ENCODE measurements at regions of chr10 and their contacts with region 1.

Region 1: GRCh38 chr10:69215405-69216176 is 4.5 kb upstream of the HKDC1 start:
- DNase-seq: peak; percentile 73
- H3K4me3 Mint-ChIP-seq: peak overlapping the region; percentile 68
- H3K27ac Mint-ChIP-seq: peak overlapping the region; percentile 84
- H3K4me1 Mint-ChIP-seq: peaks cover 35% of the 10 kb centered on the region
- H3K27me3 Mint-ChIP-seq: no peaks in the 10 kb centered on the region

Region 2: GRCh38 chr10:68997211-68997610 is 218.4 kb before region 1 on chr10:
- CTCF ChIA-PET with region 1: no interaction called
- POLR2A ChIA-PET with region 1: no interaction called
- intact Hi-C with region 1: loop called (anchors 2 kb)
- DNase-seq: peak; percentile 33
- H3K4me3 Mint-ChIP-seq: peak overlapping the region; percentile 40
- H3K27ac Mint-ChIP-seq: peak overlapping the region; percentile 94
- H3K4me1 Mint-ChIP-seq: peaks cover 52% of the 10 kb centered on the region
- H3K27me3 Mint-ChIP-seq: no peaks in the 10 kb centered on the region

Region 3: GRCh38 chr10:69160809-69161241 is 54.8 kb before region 1 on chr10:
- CTCF ChIA-PET with region 1: no interaction called
- POLR2A ChIA-PET with region 1: no interaction called
- intact Hi-C with region 1: no loop called
- DNase-seq: no peak
- H3K4me3 Mint-ChIP-seq: no peak overlapping the region
- H3K27ac Mint-ChIP-seq: no peak overlapping the region
- H3K4me1 Mint-ChIP-seq: no peaks in the 10 kb centered on the region
- H3K27me3 Mint-ChIP-seq: no peaks in the 10 kb centered on the region

Region 4: GRCh38 chr10:69179743-69180524 is 35.7 kb before region 1 on chr10 and contains the start of gene SUPV3L1:
- CTCF ChIA-PET with region 1: no interaction called
- POLR2A ChIA-PET with region 1: no interaction called
- intact Hi-C with region 1: loop called (anchors 1 kb)
- DNase-seq: peak; percentile 91
- H3K4me3 Mint-ChIP-seq: peak within 1 kb of the TSS; percentile 87
- H3K27ac Mint-ChIP-seq: peak within 1 kb of the TSS; percentile 100
- H3K4me1 Mint-ChIP-seq: peaks cover 45% of the 10 kb centered on the region
- H3K27me3 Mint-ChIP-seq: no peaks in the 10 kb centered on the region
- total RNA-seq, gene SUPV3L1: 45.0 to 47.6 TPM

Region 5: GRCh38 chr10:69202332-69202731 is 13.3 kb before region 1 on chr10:
- CTCF ChIA-PET with region 1: interaction called, 5 read pairs
- POLR2A ChIA-PET with region 1: interaction called, 14 read pairs
- intact Hi-C with region 1: loop called (anchors 1 kb)
- DNase-seq: no peak
- H3K4me3 Mint-ChIP-seq: no peak overlapping the region
- H3K27ac Mint-ChIP-seq: peak overlapping the region; percentile 69
- H3K4me1 Mint-ChIP-seq: peaks cover 36% of the 10 kb centered on the region
- H3K27me3 Mint-ChIP-seq: no peaks in the 10 kb centered on the region

Region 6: GRCh38 chr10:69232252-69232651 is 16.7 kb after region 1 on chr10:
- CTCF ChIA-PET with region 1: interaction called, 4 read pairs
- POLR2A ChIA-PET with region 1: interaction called, 5 read pairs
- intact Hi-C with region 1: loop called (anchors 1 kb)
- DNase-seq: no peak
- H3K4me3 Mint-ChIP-seq: no peak overlapping the region
- H3K27ac Mint-ChIP-seq: no peak overlapping the region
- H3K4me1 Mint-ChIP-seq: peaks cover 47% of the 10 kb centered on the region
- H3K27me3 Mint-ChIP-seq: no peaks in the 10 kb centered on the region

Region 7: GRCh38 chr10:69262292-69262751 is 46.7 kb after region 1 on chr10:
- CTCF ChIA-PET with region 1: no interaction called
- POLR2A ChIA-PET with region 1: no interaction called
- intact Hi-C with region 1: loop called (anchors 2 kb)
- DNase-seq: no peak
- H3K4me3 Mint-ChIP-seq: no peak overlapping the region
- H3K27ac Mint-ChIP-seq: peak overlapping the region; percentile 55
- H3K4me1 Mint-ChIP-seq: peaks cover 18% of the 10 kb centered on the region
- H3K27me3 Mint-ChIP-seq: no peaks in the 10 kb centered on the region

Region 8: GRCh38 chr10:69451209-69451783 is 235.7 kb after region 1 on chr10 and contains the start of gene TSPAN15:
- CTCF ChIA-PET with region 1: no interaction called
- POLR2A ChIA-PET with region 1: no interaction called
- intact Hi-C with region 1: no loop called
- DNase-seq: peak; percentile 88
- H3K4me3 Mint-ChIP-seq: peak within 1 kb of the TSS; percentile 82
- H3K27ac Mint-ChIP-seq: no peak within 1 kb of the TSS
- H3K4me1 Mint-ChIP-seq: peaks cover 14% of the 10 kb centered on the region
- H3K27me3 Mint-ChIP-seq: no peaks in the 10 kb centered on the region
- total RNA-seq, gene TSPAN15: 2.5 to 3.1 TPM

Region 9: GRCh38 chr10:70132098-70133029 is 916.8 kb after region 1 on chr10 and contains the start of gene AIFM2:
- CTCF ChIA-PET with region 1: no interaction called
- POLR2A ChIA-PET with region 1: no interaction called
- intact Hi-C with region 1: no loop called
- DNase-seq: peak; percentile 54
- H3K4me3 Mint-ChIP-seq: peak within 1 kb of the TSS; percentile 77
- H3K27ac Mint-ChIP-seq: no peak within 1 kb of the TSS
- H3K4me1 Mint-ChIP-seq: peaks cover 17% of the 10 kb centered on the region
- H3K27me3 Mint-ChIP-seq: no peaks in the 10 kb centered on the region
- total RNA-seq, gene AIFM2: 5.3 to 7.1 TPM